A549 (cell line): ENCODE measurements at regions of chr1 and their contacts with region 1.

Region 1: GRCh38 chr1:17561561-17561985 is 22.1 kb downstream of the ARHGEF10L start:
- DNase-seq: no peak
- ATAC-seq: no peak
- H3K4me3 ChIP-seq: no peak overlapping the region
- H3K27ac ChIP-seq: peak overlapping the region in 1 of 2 experiments; percentile 61; a peak in 3 of 6 replicates
- H3K4me1 ChIP-seq: peaks cover 36% of the 10 kb centered on the region
- CTCF ChIP-seq: no peak
- EP300 ChIP-seq: no peak
- POLR2A ChIP-seq: no peak
- RAD21 ChIP-seq: no peak

Region 2: GRCh38 chr1:17531682-17532487 is 29.7 kb before region 1 on chr1:
- CTCF ChIA-PET with region 1: no interaction called
- POLR2A ChIA-PET with region 1: no interaction called
- DNase-seq: no peak
- ATAC-seq: peak; percentile 36 to 45; a peak in 5 of 6 replicates
- H3K4me3 ChIP-seq: no peak overlapping the region
- H3K27ac ChIP-seq: peak overlapping the region in 1 of 2 experiments; percentile 36; a peak in 1 of 6 replicates
- H3K4me1 ChIP-seq: peaks cover 10% of the 10 kb centered on the region; the same call in 2 of the 3 replicates
- CTCF ChIP-seq: no peak
- EP300 ChIP-seq: no peak
- POLR2A ChIP-seq: no peak
- RAD21 ChIP-seq: no peak

Region 3: GRCh38 chr1:17574516-17574915 is 12.9 kb after region 1 on chr1:
- CTCF ChIA-PET with region 1: interaction called, 11 read pairs
- POLR2A ChIA-PET with region 1: no interaction called
- DNase-seq: no peak
- ATAC-seq: peak; percentile 56 to 74; a peak in 4 of 6 replicates
- H3K4me3 ChIP-seq: no peak overlapping the region
- H3K27ac ChIP-seq: peak overlapping the region in 1 of 2 experiments; percentile 78; a peak in 2 of 6 replicates
- H3K4me1 ChIP-seq: peaks cover 25% of the 10 kb centered on the region
- CTCF ChIP-seq: no peak
- EP300 ChIP-seq: no peak
- POLR2A ChIP-seq: no peak
- RAD21 ChIP-seq: 0 out of 5 replicates have a peak, but pooled peaks of 1 of the 2 experiments have one; percentile 16

Region 4: DNA sequence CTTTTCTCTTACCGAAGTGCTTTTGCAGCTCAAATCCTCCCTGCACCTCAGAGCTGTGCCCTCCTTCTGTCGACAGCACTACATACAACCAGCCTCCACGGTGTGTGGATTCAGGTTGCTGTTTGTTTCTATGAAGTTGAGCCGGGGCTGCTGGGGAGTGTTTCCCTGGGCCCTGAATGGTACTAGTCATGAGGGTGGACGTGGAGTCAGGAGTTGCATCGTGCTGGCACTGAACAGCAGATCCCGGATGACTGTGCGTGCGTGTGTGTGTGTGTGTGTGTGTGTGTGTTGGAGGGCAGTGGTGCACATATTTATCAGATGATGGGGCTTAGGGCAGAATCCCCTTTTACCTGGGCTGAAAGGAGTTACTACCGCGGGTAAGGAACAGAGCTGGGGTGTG is 240.6 kb after region 1 on chr1:
- CTCF ChIA-PET with region 1: no interaction called
- POLR2A ChIA-PET with region 1: no interaction called
- DNase-seq: no peak
- ATAC-seq: no peak
- H3K4me3 ChIP-seq: no peak overlapping the region
- H3K27ac ChIP-seq: no peak overlapping the region
- H3K4me1 ChIP-seq: 0 out of 3 replicates have a peak, but pooled peaks cover 4% of the 10 kb centered on the region
- CTCF ChIP-seq: no peak
- EP300 ChIP-seq: no peak
- POLR2A ChIP-seq: no peak
- RAD21 ChIP-seq: no peak